Sigmoid colon (tissue), 7 donors: ENCODE measurements at regions of chr20 and their contacts with region 1.

Region 1: DNA sequence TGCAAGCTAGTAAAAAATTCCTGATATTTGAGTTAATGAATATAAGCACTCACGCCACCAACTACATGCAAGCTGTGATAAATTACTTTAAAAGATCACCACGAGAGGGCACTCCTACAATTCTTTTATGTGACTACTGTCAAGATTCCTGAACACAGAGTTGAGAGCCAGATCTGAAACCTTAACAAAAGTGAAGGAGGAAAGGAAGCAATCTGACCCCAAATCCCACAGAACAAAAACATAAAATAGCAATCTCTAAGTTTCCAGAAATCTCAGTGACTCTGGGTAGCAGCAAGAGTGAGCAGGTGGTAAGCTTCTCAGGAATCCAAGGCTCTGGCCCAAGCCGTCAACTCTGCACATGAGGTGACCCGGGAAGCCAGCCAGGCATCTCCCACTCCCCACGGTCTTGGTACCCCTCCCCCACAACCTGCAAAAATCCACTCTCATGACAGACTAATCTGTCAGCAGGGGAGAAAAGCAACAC is 55.1 kb downstream of the STAU1 start:
- DNase-seq: no peak
- H3K4me3 ChIP-seq: no peak overlapping the region
- H3K27ac ChIP-seq: peak overlapping the region in 3 of 4 donors; percentile 19 to 50 (median 36)
- H3K4me1 ChIP-seq: peaks cover 0 to 11% (median 7%) of the 10 kb centered on the region in 4 donors
- H3K27me3 ChIP-seq: no peaks in the 10 kb centered on the region
- CTCF ChIP-seq: peak; percentile 26 to 66 (median 48)
- EP300 ChIP-seq: no peak
- POLR2A ChIP-seq: no peak

Region 2: DNA sequence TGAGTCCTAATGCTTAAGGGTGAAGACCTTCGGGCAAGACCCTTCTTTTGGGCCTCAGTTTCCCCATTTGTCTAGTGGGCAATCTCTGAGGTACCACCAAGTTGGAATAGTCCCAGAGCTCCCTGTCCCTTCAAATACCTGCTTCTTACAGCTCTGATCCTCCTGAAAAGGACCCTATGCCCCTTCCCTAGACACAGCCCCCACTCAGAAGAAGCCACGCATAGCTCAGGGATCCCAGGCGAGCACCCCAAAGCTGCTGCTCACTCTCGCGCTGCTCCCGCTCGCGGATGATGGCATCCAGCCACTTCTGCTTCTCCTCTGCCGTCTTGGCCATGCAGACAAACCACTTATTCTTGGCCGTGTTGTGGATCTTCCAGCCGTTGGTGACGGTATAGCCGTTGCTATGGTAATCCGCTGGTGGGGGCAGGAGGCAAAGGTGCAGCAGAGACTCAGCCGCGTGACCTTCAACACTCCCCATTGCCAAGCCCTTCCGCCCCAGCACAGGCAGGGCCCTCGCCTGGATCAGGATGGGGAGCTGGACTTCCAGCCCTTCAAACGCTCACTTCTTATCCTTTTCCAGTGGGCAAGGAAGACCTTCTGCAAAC is 442.3 kb before region 1 on chr20:
- intact Hi-C with region 1: no loop called
- DNase-seq: no peak
- H3K4me3 ChIP-seq: no peak overlapping the region
- H3K27ac ChIP-seq: no peak overlapping the region
- H3K4me1 ChIP-seq: peaks cover 0 to 11% (median 10%) of the 10 kb centered on the region in 4 donors
- H3K27me3 ChIP-seq: no peaks in the 10 kb centered on the region
- CTCF ChIP-seq: no peak
- EP300 ChIP-seq: no peak
- POLR2A ChIP-seq: no peak

Region 3: GRCh38 chr20:48928832-48929725 is 204.0 kb before region 1 on chr20:
- intact Hi-C with region 1: no loop called
- DNase-seq: no peak
- H3K4me3 ChIP-seq: no peak overlapping the region
- H3K27ac ChIP-seq: peak overlapping the region; percentile 63 to 81 (median 68)
- H3K4me1 ChIP-seq: peaks cover 0 to 47% (median 41%) of the 10 kb centered on the region in 4 donors
- H3K27me3 ChIP-seq: no peaks in the 10 kb centered on the region
- CTCF ChIP-seq: no peak
- EP300 ChIP-seq: no peak
- POLR2A ChIP-seq: no peak

Region 4: DNA sequence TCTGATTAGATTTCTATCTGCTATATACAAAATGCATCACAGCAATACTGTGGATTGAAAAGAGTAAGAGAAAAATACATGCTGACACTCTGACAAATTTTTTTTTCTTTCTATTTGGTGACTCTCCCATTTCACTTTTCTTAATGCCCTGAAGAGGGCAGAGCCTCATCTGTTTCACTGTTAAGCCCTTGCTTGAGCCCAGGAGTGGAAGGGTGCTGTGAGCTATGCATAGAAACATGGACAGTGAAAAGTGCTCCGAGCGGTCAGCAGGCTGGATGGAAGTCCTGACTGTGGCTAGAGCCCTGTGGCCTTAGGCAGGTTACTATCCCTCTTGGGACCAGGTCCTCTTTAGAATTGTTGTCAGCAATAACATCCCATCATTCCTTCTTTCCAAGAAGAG is 104.4 kb before region 1 on chr20:
- intact Hi-C with region 1: no loop called
- DNase-seq: no peak
- H3K4me3 ChIP-seq: no peak overlapping the region
- H3K27ac ChIP-seq: peak overlapping the region in 2 of 4 donors; percentile 37 to 71
- H3K4me1 ChIP-seq: no peaks in the 10 kb centered on the region
- H3K27me3 ChIP-seq: no peaks in the 10 kb centered on the region
- CTCF ChIP-seq: no peak
- EP300 ChIP-seq: no peak
- POLR2A ChIP-seq: no peak

Region 5: DNA sequence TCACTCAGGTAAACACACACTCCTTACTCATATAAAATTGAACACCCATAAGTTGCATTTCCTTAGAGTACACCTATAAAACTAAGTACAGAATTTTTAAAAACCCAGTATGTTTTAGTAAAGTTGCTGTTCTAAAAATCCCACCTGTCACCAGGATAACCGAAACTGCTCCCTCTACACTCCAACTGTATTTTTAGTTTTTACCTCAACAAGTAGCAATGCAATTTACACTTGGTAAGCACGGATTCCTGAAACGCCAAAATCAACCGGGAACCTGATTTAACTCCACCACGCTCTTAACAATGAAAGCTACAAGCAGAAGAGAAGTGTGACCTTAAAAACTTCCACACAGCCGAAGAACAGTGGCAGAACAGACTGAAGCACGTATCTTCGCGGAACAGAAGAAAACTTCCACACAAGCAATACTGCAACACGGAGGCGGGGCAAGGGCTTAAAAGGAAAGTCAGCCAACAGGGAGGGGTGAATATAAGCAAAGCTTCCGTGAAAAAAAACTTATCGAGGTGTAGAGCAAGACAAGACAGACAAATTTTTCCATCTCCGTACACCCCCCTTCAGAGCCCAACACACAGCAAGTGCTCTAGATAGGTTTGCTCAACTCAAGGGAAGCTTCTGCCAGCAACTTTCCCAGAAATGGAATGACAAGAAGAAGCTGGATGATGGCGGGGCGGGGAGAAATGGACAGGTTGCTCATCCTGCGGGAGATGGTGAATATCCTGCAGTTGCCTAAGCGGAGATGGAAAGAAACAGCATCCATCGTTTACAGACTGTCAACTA is 53.7 kb after region 1 on chr20:
- intact Hi-C with region 1: loop called (anchors 2 kb)
- DNase-seq: peak; percentile 85
- H3K4me3 ChIP-seq: peak overlapping the region; percentile 79 to 95 (median 90)
- H3K27ac ChIP-seq: peak overlapping the region; percentile 90 to 98 (median 96)
- H3K4me1 ChIP-seq: peaks cover 0 to 48% (median 34%) of the 10 kb centered on the region in 4 donors
- H3K27me3 ChIP-seq: no peaks in the 10 kb centered on the region
- CTCF ChIP-seq: no peak
- EP300 ChIP-seq: no peak
- POLR2A ChIP-seq: peak in 1 of 2 donors; percentile 12